Breast epithelium (tissue), 4 donors: ENCODE measurements at regions of chr11 and their contacts with region 1.

Region 1: DNA sequence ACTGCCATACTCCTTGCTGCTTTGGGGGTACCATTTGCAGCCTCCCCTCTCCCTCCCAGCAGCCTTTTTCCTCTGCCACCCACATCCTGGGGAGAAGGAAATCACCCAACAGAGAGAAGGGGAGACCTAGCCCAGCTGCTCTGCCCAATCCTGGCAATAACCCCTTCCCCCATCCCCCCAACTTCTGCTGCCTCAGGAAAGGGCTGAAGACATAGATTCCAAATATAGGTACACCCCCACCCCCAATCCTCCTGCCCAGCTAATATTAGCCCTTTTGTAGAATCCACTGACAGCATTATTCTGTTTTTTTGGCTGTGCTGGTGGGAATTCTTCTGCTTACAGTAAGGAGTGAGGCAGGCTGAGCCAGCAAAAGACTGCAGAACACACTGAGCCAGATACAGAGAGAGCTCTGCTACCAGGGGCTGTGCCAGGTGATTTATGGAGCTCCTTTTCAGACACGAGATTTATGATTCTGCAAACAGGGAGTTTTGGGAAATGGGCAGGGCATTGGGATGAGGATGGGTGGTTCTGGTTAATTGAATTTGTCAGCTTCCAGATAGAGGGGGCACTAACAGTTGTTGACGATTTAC is 164.0 kb downstream of the TENM4 start:
- DNase-seq: no peak
- H3K4me3 ChIP-seq: no peak overlapping the region
- H3K27ac ChIP-seq: no peak overlapping the region
- H3K4me1 ChIP-seq: no peaks in the 10 kb centered on the region
- H3K27me3 ChIP-seq: no peaks in the 10 kb centered on the region
- CTCF ChIP-seq: no peak
- POLR2A ChIP-seq: no peak

Region 2: GRCh38 chr11:79244241-79244772 is 32.5 kb before region 1 on chr11:
- intact Hi-C with region 1: loop called (anchors 1 kb)
- DNase-seq: no peak
- H3K4me3 ChIP-seq: no peak overlapping the region
- H3K27ac ChIP-seq: peak overlapping the region in 1 of 2 donors; percentile 71
- H3K4me1 ChIP-seq: no peaks in the 10 kb centered on the region
- H3K27me3 ChIP-seq: no peaks in the 10 kb centered on the region
- CTCF ChIP-seq: no peak
- POLR2A ChIP-seq: no peak